Sigmoid colon (tissue), 7 donors: ENCODE measurements at regions of chr1 and their contacts with region 1.

Region 1: GRCh38 chr1:248873409-248873992 is 14.6 kb upstream of the ZNF692 start:
- DNase-seq: peak; percentile 97
- H3K4me3 ChIP-seq: peak overlapping the region; percentile 44 to 64 (median 58)
- H3K27ac ChIP-seq: peak overlapping the region; percentile 93 to 96 (median 96)
- H3K4me1 ChIP-seq: peaks cover 0 to 7% (median 3%) of the 10 kb centered on the region in 4 donors
- H3K27me3 ChIP-seq: no peaks in the 10 kb centered on the region
- CTCF ChIP-seq: no peak
- EP300 ChIP-seq: no peak
- POLR2A ChIP-seq: peak; percentile 18 to 42

Region 2: DNA sequence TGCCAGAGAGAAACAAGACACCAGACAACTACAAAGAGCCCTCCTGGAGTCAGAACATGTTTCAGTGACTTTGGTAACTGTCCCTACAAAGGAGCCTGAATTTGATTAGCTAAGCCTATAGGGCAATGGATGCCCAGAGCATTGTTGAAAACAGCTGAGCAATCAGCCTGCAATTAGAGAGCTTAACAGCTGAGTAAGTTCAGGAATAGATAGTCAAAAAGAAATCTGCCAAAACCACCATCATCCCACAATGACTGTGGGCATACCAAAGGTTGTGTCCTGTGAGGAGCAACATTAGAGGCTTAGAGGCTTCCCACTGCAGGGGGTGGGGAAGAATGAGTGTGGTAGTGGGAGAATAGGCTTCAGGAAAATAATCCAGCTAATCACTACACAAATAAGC is 79.9 kb before region 1 on chr1:
- intact Hi-C with region 1: no loop called
- DNase-seq: no peak
- H3K4me3 ChIP-seq: no peak overlapping the region
- H3K27ac ChIP-seq: no peak overlapping the region
- H3K4me1 ChIP-seq: no peaks in the 10 kb centered on the region
- H3K27me3 ChIP-seq: no peaks in the 10 kb centered on the region
- CTCF ChIP-seq: no peak
- EP300 ChIP-seq: no peak
- POLR2A ChIP-seq: no peak

Region 3: DNA sequence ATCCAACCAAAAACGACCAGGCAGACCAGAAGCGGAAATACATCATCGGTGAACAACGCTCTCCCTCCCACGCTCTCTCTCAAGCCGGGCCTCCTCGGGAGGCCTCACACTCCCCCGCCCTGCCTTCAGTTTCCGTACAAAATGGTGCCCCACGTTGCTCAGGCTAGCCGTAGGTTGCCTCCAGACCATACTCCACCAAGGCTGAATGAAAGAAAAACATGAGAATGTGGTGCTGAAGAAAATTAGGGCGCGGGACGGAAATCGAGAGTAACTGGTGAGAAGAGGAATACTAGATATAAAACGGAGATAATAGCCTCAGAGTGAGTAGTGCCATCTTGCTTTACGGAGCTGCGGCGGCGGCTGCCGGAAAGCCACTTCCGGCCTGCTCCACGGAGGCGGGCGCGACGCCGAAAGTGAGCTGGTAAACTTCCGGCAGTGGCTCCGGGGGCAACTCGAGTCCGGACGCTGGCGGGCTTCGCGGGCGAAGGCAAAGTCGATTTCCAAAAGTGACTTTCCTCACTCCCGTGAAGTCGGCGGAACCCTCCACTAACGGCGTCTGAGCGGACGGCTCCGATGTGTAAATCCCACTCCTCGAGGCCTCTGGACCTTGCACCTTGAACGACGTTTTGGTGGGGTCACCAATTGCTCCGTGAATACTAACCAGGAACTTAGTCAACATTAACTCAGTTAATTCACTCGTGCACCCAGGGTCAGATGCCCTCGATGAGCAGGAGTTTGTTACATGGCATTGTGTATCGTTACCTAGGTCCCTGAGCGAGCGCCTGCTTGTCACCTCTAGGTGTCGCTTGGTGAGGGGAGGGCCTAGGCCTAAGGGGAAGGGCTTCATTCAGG is 47.4 kb before region 1 on chr1 and contains the start of gene SH3BP5L:
- intact Hi-C with region 1: loop called (anchors 2 kb)
- DNase-seq: peak; percentile 96
- H3K4me3 ChIP-seq: peak within 1 kb of the TSS; percentile 55 to 93 (median 73)
- H3K27ac ChIP-seq: peak within 1 kb of the TSS; percentile 94 to 98 (median 95)
- H3K4me1 ChIP-seq: peaks cover 0 to 49% (median 49%) of the 10 kb centered on the region in 4 donors
- H3K27me3 ChIP-seq: no peaks in the 10 kb centered on the region
- CTCF ChIP-seq: peak; percentile 32 to 56 (median 48)
- EP300 ChIP-seq: no peak
- POLR2A ChIP-seq: peak; percentile 62 to 80
- total RNA-seq, gene SH3BP5L: 13.7 to 18.3 (median 15.3) TPM

Region 4: DNA sequence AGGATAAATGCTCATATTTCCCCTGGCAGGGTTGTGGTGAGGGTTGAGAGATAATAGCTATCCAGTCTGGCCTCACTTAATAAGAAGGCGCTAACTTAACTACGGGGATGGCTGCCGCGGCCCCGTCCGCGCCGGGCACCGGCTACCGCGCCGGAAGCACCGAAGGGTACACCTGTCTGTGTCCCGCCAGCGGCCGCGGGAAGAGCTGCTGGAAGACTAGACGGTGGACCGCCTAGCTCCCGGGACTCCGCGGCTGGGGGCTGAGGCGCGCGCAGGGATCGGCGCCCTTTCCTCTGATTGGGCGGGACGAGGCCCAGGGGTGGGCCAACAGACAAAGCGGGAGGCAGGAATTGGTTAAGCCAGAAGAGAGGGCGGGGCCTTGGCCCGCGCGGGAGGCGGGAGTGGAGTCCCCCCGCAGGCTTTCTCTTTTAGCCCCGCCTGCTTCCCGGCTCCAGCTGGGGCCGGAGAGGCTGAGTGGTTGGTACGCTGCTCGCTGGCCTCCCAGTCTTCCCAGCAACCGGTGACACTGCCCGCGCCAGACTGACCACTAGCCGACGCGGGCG is 35.6 kb before region 1 on chr1 and contains the start of gene ZNF672:
- intact Hi-C with region 1: loop called (anchors 1 kb)
- DNase-seq: peak; percentile 100
- H3K4me3 ChIP-seq: peak within 1 kb of the TSS; percentile 87 to 96 (median 93)
- H3K27ac ChIP-seq: peak within 1 kb of the TSS; percentile 99 to 100 (median 100)
- H3K4me1 ChIP-seq: peaks cover 0 to 46% (median 44%) of the 10 kb centered on the region in 4 donors
- H3K27me3 ChIP-seq: no peaks in the 10 kb centered on the region
- CTCF ChIP-seq: no peak
- EP300 ChIP-seq: no peak
- POLR2A ChIP-seq: peak in 1 of 2 donors; percentile 71
- total RNA-seq, gene ZNF672: 17.5 to 31.1 (median 22.5) TPM

Region 5: DNA sequence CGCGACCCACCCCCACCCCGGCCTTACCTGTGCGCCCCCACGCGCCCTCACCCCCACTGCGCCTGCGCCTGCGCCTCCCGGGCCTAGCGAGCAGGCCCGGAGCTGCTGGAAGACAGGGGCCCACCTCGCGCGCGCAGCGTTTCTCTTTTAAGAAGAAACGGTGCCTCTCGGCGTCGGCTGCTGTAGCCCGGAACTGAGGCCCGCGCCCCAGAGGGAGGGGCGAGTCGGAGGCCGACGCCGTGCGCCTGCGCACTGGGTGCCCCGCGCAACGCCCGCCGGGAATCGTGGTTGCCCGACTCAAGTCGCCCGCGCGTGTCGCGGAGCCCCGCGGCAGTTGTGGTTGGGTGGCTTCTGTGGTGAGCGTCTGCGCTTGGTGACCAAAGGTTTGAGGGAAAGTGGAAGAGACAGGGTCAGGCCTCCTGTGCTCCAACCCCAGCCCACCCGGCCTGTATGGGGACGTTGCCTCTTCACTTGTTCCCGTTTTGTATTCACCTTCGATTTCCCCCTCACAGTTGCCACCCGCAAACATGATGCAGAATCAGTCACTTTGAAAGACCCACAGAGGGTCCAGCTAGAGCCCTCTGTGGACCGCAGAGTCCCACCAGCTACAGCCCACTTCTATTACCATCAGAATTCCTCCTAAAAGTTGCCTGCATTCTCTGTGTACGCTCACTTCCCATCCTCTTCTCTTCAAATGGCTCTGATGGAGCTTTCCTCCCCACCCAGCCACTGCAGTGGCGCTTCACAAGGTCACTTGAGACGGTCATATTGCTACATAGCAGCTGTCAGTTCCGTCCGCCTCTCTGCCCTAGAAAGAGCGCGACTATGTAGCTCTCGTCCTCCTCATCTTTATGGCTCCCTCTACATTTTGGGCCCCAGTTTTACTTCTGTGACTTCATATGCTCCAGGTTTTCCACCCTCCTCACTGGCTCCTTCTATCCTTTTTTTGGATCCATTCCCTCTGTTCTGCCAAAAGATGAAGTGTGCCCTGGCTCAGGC is 14.3 kb before region 1 on chr1 and contains the start of gene ZNF692:
- intact Hi-C with region 1: loop called (anchors 2 kb)
- DNase-seq: peak; percentile 99
- H3K4me3 ChIP-seq: peak within 1 kb of the TSS; percentile 43 to 61 (median 58)
- H3K27ac ChIP-seq: peak within 1 kb of the TSS; percentile 91 to 96 (median 92)
- H3K4me1 ChIP-seq: peaks cover 0 to 43% (median 32%) of the 10 kb centered on the region in 4 donors
- H3K27me3 ChIP-seq: no peaks in the 10 kb centered on the region
- CTCF ChIP-seq: no peak
- EP300 ChIP-seq: no peak
- POLR2A ChIP-seq: peak; percentile 62 to 84
- total RNA-seq, gene ZNF692: 23.5 to 59.8 (median 30.9) TPM

Region 6: DNA sequence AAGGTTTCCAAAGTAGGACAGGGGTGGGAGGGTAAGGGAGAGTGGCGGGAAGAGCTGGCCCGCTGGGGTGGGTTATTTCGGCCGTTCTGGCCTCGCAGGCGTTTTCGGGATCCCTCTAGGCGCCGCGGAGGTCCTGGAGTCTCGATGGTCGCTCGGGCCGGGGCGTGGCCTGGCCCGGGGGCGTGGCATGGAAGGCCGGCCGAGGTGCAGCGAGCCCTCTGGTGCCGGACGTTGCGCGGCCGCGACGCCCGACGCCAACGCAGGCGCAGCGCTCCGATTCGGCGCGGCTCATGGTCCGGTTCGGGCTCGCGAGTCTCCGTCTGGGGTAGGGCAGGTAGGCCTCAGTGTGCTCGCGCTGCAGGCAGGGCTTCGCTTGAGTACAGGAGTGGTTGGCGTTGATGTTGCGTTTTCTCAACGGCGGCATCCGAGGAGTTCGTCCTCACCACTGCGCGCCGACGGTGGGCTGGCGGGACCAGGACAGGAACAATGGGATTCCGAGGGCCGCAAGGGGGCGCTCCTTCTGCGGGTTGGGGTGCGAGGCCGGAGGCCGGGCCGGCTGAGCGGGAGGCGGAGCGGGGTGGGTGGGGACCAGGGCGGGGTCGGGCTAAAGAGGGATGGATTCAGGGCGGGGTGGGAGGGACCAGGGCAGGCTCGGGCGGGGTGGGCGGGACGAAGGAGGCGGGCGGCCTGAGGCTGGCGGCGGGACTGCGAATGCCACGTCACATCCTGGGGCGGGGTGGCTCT is 32.7 kb after region 1 on chr1 and contains the start of gene PGBD2:
- intact Hi-C with region 1: loop called (anchors 1 kb)
- DNase-seq: peak; percentile 95
- H3K4me3 ChIP-seq: peak within 1 kb of the TSS; percentile 55 to 67 (median 57)
- H3K27ac ChIP-seq: peak within 1 kb of the TSS; percentile 85 to 96 (median 93)
- H3K4me1 ChIP-seq: peaks cover 0 to 15% (median 12%) of the 10 kb centered on the region in 4 donors
- H3K27me3 ChIP-seq: no peaks in the 10 kb centered on the region
- CTCF ChIP-seq: peak; percentile 43 to 48 (median 46)
- EP300 ChIP-seq: no peak
- POLR2A ChIP-seq: peak in 1 of 2 donors; percentile 40
- total RNA-seq, gene PGBD2: 3.3 to 5.4 (median 4.3) TPM

Region 7: DNA sequence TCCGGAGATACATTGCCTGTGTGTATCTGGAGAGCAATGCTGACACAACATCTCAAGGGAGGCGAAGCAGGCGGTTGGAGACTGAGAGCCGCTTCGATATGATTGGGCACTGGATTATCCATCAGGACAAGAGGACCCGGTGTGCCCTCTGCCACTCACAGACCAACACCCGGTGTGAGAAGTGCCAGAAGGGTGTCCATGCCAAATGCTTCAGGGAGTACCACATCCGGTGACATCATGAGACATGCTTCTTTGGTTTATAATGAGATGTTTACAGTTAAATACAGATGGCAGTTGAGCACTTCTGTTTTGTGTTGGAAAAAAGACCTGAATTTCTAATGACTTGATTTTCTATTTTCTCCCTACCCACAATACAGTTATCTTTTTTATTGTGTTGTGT is 44.6 kb after region 1 on chr1:
- intact Hi-C with region 1: no loop called
- DNase-seq: no peak
- H3K4me3 ChIP-seq: no peak overlapping the region
- H3K27ac ChIP-seq: no peak overlapping the region
- H3K4me1 ChIP-seq: peaks cover 0 to 4% (median under 1%) of the 10 kb centered on the region in 4 donors
- H3K27me3 ChIP-seq: no peaks in the 10 kb centered on the region
- CTCF ChIP-seq: no peak
- EP300 ChIP-seq: no peak
- POLR2A ChIP-seq: no peak